ENCODE measurements at regions of chr19 and their contacts with region 1.

Region 1: DNA sequence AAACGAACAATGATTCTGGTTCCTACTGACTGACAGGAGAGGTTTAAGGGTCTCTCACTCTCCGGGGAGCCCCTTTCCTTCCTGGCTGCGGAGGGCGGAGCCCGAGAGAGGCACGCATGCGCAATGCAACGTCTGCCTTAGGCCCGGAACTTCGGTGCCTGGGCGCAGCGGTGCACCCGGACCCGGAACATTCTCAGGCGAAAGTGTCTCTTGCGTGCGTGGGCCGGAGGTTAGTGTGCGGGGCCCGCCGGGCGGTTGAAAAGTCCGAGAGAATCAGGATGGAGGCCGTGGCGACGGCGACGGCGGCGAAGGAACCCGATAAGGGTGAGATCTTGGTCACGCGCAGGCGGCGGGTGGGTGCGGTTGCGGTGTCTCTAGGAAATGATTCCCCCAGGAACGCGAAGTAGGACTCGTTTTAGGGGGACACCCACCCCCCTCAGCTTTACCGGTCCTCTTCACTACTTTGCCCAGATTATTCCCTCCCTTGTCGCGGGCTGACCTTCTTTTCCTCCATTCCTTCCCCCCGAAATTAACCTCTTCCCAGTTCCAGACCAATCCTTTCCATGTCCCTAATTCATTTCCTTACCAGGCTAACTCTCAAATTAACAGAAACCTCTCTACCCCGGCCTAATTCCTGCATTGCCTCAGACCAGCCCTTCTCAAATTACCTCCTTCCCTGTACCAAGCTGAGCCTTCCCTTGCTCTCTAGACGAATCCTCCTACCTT is at the start of gene CCDC97:
- DNase-seq: peak; percentile 85 to 94 (median 91)
- ATAC-seq: peak; percentile 72
- H3K4me3 ChIP-seq: peak within 1 kb of the TSS; percentile 72
- H3K4me3 Mint-ChIP-seq: peak within 1 kb of the TSS; percentile 93 to 100 (median 96)
- H3K27ac ChIP-seq: peak within 1 kb of the TSS; percentile 87
- H3K27ac Mint-ChIP-seq: peak within 1 kb of the TSS; percentile 94 to 99 (median 98)
- H3K4me1 ChIP-seq: peaks cover 51 to 60% of the 10 kb centered on the region in 2 donors
- H3K4me1 Mint-ChIP-seq: peaks cover 52 to 90% (median 69%) of the 10 kb centered on the region in 7 donors
- H3K27me3 ChIP-seq: no peaks in the 10 kb centered on the region
- H3K27me3 Mint-ChIP-seq: peaks cover 0 to 3% (median 0%) of the 10 kb centered on the region in 5 donors
- total RNA-seq, gene CCDC97: 35.9 to 56.5 (median 49.1) TPM

Region 2: GRCh38 chr19:40662921-40663694 is 647.1 kb before region 1 on chr19:
- CTCF ChIA-PET with region 1: interaction called, 3 read pairs
- POLR2A ChIA-PET with region 1: no interaction called
- intact Hi-C with region 1: loop called in 1 of 2 experiments (anchors 1 kb)
- DNase-seq: peak; percentile 81 to 96 (median 92)
- ATAC-seq: peak; percentile 96
- H3K4me3 ChIP-seq: peak overlapping the region; percentile 75
- H3K4me3 Mint-ChIP-seq: peak overlapping the region; percentile 76 to 91 (median 84)
- H3K27ac ChIP-seq: peak overlapping the region; percentile 75
- H3K27ac Mint-ChIP-seq: peak overlapping the region; percentile 67 to 91 (median 84)
- H3K4me1 ChIP-seq: peaks cover 0 to 7% of the 10 kb centered on the region in 2 donors
- H3K4me1 Mint-ChIP-seq: peaks cover 0 to 27% (median 6%) of the 10 kb centered on the region in 7 donors
- H3K27me3 ChIP-seq: no peaks in the 10 kb centered on the region
- H3K27me3 Mint-ChIP-seq: peaks cover 0 to 4% (median 0%) of the 10 kb centered on the region in 5 donors

Region 3: DNA sequence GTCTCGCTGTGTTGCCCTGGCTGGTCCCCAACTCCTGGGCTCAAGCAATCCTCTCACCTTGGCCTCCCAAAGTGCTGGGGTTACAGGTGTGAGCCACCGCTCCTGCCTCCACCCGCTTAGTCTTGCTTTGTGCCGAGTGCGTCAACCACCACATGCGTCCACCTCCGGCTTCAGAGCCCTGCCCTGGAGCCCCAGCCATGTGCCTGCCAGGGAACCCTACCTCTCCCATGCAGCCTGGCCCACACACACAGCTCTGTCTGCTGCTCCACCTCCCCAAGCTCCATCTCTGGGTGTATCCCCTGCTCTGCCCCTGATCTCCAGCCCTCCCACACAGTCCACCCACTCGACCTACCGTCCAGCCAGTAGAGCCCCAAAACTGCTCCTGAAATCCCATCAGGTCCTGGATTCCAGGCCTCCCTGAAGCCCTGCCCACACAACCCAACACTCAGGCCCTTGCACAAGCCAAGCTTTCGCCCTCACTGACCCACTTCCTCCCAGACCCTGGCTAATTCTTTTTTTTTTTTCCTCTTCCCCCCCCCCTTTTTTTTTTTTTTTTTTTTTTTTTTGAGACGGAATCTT is 186.4 kb before region 1 on chr19:
- CTCF ChIA-PET with region 1: interaction called, 3 read pairs
- POLR2A ChIA-PET with region 1: no interaction called
- intact Hi-C with region 1: loop called (anchors 2 to 5 kb)
- DNase-seq: no peak
- ATAC-seq: no peak
- H3K4me3 ChIP-seq: no peak overlapping the region
- H3K4me3 Mint-ChIP-seq: no peak overlapping the region
- H3K27ac ChIP-seq: no peak overlapping the region
- H3K27ac Mint-ChIP-seq: peak overlapping the region; percentile 9 to 95 (median 88)
- H3K4me1 ChIP-seq: peaks cover 26 to 31% of the 10 kb centered on the region in 2 donors
- H3K4me1 Mint-ChIP-seq: peaks cover 21 to 49% (median 44%) of the 10 kb centered on the region in 7 donors
- H3K27me3 ChIP-seq: no peaks in the 10 kb centered on the region
- H3K27me3 Mint-ChIP-seq: peaks cover 0 to 14% (median 0%) of the 10 kb centered on the region in 5 donors

Region 4: DNA sequence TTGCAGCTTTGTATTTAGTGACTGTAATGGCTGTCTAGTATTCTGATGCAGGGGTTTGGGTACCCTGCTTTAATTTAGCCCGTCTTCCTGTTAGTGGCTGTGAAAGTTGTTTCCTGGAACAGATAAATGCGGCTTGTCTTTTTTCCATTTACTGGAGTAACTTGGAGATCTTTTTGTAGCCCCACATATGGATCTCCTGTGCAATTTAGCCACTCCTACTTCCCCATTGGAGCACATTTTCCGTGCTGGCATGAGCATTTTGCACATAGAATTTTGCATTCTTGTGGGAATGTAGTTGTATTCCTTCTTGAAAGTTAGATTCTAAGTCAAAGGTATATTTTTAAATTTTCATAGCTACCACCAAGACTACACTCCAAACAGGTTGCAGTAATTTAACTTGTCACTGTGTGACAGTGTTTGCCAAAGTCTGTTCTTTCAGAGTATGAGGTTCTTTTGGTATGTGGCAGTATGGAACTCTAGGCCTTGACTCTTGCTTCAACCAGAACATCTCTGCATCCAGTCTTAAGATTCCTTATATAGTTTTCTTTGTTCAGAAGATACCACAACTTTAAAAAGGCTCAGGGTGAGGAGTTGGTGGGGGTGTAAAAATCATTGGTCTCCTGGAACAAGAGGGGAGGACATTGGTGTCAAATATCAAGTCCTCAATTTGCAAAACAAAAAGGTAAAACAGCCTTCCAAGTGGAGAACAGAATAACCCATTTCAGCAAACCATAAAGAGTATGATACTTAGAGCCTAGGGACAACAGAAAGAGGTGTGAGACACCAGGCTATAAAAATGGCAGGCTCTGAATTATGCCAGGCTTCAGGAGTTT is 21.3 kb before region 1 on chr19:
- CTCF ChIA-PET with region 1: interaction called, 4 read pairs
- POLR2A ChIA-PET with region 1: interaction called, 32 read pairs
- intact Hi-C with region 1: loop called in 1 of 2 experiments (anchors 1 kb)
- DNase-seq: no peak
- ATAC-seq: no peak
- H3K4me3 ChIP-seq: no peak overlapping the region
- H3K4me3 Mint-ChIP-seq: no peak overlapping the region
- H3K27ac ChIP-seq: no peak overlapping the region
- H3K27ac Mint-ChIP-seq: peak overlapping the region in 6 of 9 donors; percentile 8 to 61 (median 48)
- H3K4me1 ChIP-seq: peaks cover 0 to 5% of the 10 kb centered on the region in 2 donors
- H3K4me1 Mint-ChIP-seq: peaks cover 0 to 23% (median 10%) of the 10 kb centered on the region in 7 donors
- H3K27me3 ChIP-seq: no peaks in the 10 kb centered on the region
- H3K27me3 Mint-ChIP-seq: no peaks in the 10 kb centered on the region

Region 5: GRCh38 chr19:41397086-41398049 is 87.2 kb after region 1 on chr19 and contains the starts of genes BCKDHA and EXOSC5:
- CTCF ChIA-PET with region 1: no interaction called
- POLR2A ChIA-PET with region 1: no interaction called
- intact Hi-C with region 1: loop called (anchors 1 kb)
- DNase-seq: peak; percentile 96 to 100 (median 99)
- ATAC-seq: peak; percentile 99
- H3K4me3 ChIP-seq: peak within 1 kb of the TSS; percentile 96
- H3K4me3 Mint-ChIP-seq: peak within 1 kb of the TSS; percentile 95 to 99 (median 98)
- H3K27ac ChIP-seq: peak within 1 kb of the TSS; percentile 89
- H3K27ac Mint-ChIP-seq: peak within 1 kb of the TSS; percentile 99 to 100 (median 100)
- H3K4me1 ChIP-seq: peaks cover 19 to 23% of the 10 kb centered on the region in 2 donors
- H3K4me1 Mint-ChIP-seq: peaks cover 33 to 61% (median 50%) of the 10 kb centered on the region in 7 donors
- H3K27me3 ChIP-seq: no peaks in the 10 kb centered on the region
- H3K27me3 Mint-ChIP-seq: no peaks in the 10 kb centered on the region
- total RNA-seq, gene BCKDHA: 19.4 to 25.0 (median 20.5) TPM
- total RNA-seq, gene EXOSC5: 15.0 to 37.5 (median 20.6) TPM

Region 6: GRCh38 chr19:41563854-41564514 is 253.8 kb after region 1 on chr19:
- CTCF ChIA-PET with region 1: no interaction called
- POLR2A ChIA-PET with region 1: no interaction called
- intact Hi-C with region 1: loop called in 1 of 2 experiments (anchors 5 kb)
- DNase-seq: peak in 6 of 9 donors; percentile 50 to 86 (median 72)
- ATAC-seq: peak; percentile 86
- H3K4me3 ChIP-seq: peak overlapping the region; percentile 49
- H3K4me3 Mint-ChIP-seq: peak overlapping the region; percentile 73 to 93 (median 87)
- H3K27ac ChIP-seq: peak overlapping the region; percentile 74
- H3K27ac Mint-ChIP-seq: peak overlapping the region; percentile 70 to 98 (median 92)
- H3K4me1 ChIP-seq: peaks cover 38 to 40% of the 10 kb centered on the region in 2 donors
- H3K4me1 Mint-ChIP-seq: peaks cover 55 to 95% (median 88%) of the 10 kb centered on the region in 7 donors
- H3K27me3 ChIP-seq: no peaks in the 10 kb centered on the region
- H3K27me3 Mint-ChIP-seq: peaks cover 0 to 8% (median 0%) of the 10 kb centered on the region in 5 donors

Region 7: GRCh38 chr19:41746593-41747227 is 436.5 kb after region 1 on chr19:
- CTCF ChIA-PET with region 1: no interaction called
- POLR2A ChIA-PET with region 1: no interaction called
- intact Hi-C with region 1: no loop called
- DNase-seq: peak in 8 of 9 donors; percentile 27 to 62 (median 48)
- ATAC-seq: peak; percentile 82
- H3K4me3 ChIP-seq: no peak overlapping the region
- H3K4me3 Mint-ChIP-seq: no peak overlapping the region
- H3K27ac ChIP-seq: no peak overlapping the region
- H3K27ac Mint-ChIP-seq: no peak overlapping the region
- H3K4me1 ChIP-seq: no peaks in the 10 kb centered on the region
- H3K4me1 Mint-ChIP-seq: peaks cover 0 to 10% (median 0%) of the 10 kb centered on the region in 7 donors
- H3K27me3 ChIP-seq: peaks cover 0 to 3% of the 10 kb centered on the region in 2 donors
- H3K27me3 Mint-ChIP-seq: peaks cover 45 to 71% (median 46%) of the 10 kb centered on the region in 5 donors

Region 8: GRCh38 chr19:42038666-42039065 is 728.5 kb after region 1 on chr19:
- CTCF ChIA-PET with region 1: no interaction called
- POLR2A ChIA-PET with region 1: no interaction called
- intact Hi-C with region 1: no loop called
- DNase-seq: no peak
- ATAC-seq: no peak
- H3K4me3 ChIP-seq: no peak overlapping the region
- H3K4me3 Mint-ChIP-seq: no peak overlapping the region
- H3K27ac ChIP-seq: no peak overlapping the region
- H3K27ac Mint-ChIP-seq: no peak overlapping the region
- H3K4me1 ChIP-seq: no peaks in the 10 kb centered on the region
- H3K4me1 Mint-ChIP-seq: peaks cover 0 to 8% (median 0%) of the 10 kb centered on the region in 7 donors
- H3K27me3 ChIP-seq: no peaks in the 10 kb centered on the region
- H3K27me3 Mint-ChIP-seq: no peaks in the 10 kb centered on the region

Measured in naive thymus-derived CD4-positive, alpha-beta T cell (primary cell).